CD4-positive, alpha-beta T cell (primary cell): ENCODE measurements at regions of chr18 and their contacts with region 1.

Region 1: DNA sequence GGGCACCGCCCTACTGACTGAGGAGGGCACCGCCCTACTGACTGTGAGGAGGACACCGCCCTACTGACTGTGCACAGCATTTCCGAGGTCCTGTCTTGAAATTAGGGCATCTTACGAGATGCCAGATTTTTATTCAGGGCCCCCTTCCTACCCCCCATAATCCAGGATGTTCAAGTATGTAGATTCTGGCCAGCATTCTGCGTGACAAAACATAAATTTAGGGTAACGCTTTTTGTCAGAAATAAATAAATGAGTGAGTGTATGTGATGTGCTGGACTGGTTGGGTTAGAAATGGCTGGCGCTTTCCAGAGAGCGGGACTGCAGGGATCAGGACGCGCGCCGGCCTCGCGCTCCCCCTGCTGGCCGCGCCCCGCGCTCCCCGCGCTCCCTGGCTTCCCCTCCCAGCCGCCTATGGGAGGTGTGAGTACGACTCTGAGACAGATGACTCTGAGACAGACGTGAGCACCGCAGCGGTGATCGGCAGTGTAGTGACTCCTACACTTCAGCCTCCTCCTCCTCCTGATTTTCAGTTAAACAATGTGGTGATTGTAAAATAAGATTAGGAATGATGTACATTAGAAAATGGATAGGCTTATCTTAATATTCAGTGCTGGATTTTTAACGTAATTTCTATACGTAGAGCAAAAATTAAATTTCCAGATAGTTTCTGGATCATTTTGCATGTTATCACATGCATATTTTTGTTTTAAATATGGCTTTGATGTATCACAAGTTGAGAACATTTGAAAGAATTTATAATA is 149.2 kb upstream of the NFATC1 start:
- DNase-seq: peak; percentile 37 to 84 (median 60)
- ATAC-seq: peak; percentile 86
- H3K4me3 ChIP-seq: peak overlapping the region; percentile 17
- H3K4me3 Mint-ChIP-seq: peak overlapping the region; percentile 49
- H3K27ac ChIP-seq: peak overlapping the region in 1 of 2 donors; percentile 53
- H3K27ac Mint-ChIP-seq: peak overlapping the region; percentile 81
- H3K4me1 ChIP-seq: peaks cover 11% of the 10 kb centered on the region
- H3K4me1 Mint-ChIP-seq: peaks cover 17% of the 10 kb centered on the region
- H3K27me3 ChIP-seq: no peaks in the 10 kb centered on the region
- H3K27me3 Mint-ChIP-seq: no peaks in the 10 kb centered on the region
- CTCF ChIP-seq: peak; percentile 95

Region 2: DNA sequence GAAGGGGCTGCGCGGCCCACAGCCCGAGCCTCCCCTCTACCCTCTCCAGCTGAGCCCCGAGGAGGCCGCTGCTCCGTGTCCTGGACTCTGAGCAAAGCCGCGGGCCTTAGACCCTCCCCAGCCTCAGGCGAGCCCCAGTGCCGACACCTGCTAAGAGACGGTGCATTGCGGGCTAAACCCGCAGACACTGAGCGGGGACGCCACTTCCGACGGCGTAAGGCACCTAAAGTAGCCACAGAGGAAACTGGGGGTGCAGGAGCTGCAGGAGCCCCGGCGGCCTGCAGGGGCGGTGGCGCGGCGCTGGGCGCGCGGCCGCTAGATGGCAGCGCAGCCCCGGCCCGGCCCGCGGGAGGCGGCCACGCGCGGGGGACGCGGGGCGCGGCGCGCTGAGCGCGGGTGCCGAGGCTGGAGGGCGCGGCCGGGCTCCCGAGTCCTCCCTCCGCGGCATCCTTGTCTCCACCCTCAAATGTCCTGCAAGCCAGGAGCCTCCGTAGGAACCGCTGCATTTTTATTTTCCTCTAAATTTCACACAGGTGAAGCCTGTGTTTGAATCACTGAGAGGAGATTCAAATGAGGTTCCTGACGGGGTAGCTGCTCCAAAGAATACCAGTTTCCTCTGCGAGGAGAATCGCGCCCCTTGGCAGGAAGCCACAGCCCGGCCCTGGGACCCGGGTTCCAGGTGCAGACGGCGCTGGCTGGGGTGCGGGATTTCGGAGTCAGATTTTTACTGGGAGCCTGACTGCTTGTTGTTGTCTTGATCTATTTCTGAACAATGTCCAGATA is 1346.4 kb before region 1 on chr18:
- CTCF ChIA-PET with region 1: no interaction called
- POLR2A ChIA-PET with region 1: no interaction called
- intact Hi-C with region 1: loop called (anchors 5 to 10 kb)
- DNase-seq: peak; percentile 12 to 77 (median 40)
- ATAC-seq: peak; percentile 97
- H3K4me3 ChIP-seq: peak overlapping the region; percentile 26
- H3K4me3 Mint-ChIP-seq: peak overlapping the region; percentile 60
- H3K27ac ChIP-seq: no peak overlapping the region
- H3K27ac Mint-ChIP-seq: no peak overlapping the region
- H3K4me1 ChIP-seq: peaks cover 9% of the 10 kb centered on the region
- H3K4me1 Mint-ChIP-seq: no peaks in the 10 kb centered on the region
- H3K27me3 ChIP-seq: no peaks in the 10 kb centered on the region
- H3K27me3 Mint-ChIP-seq: peaks cover 20% of the 10 kb centered on the region
- CTCF ChIP-seq: peak; percentile 73

Region 3: DNA sequence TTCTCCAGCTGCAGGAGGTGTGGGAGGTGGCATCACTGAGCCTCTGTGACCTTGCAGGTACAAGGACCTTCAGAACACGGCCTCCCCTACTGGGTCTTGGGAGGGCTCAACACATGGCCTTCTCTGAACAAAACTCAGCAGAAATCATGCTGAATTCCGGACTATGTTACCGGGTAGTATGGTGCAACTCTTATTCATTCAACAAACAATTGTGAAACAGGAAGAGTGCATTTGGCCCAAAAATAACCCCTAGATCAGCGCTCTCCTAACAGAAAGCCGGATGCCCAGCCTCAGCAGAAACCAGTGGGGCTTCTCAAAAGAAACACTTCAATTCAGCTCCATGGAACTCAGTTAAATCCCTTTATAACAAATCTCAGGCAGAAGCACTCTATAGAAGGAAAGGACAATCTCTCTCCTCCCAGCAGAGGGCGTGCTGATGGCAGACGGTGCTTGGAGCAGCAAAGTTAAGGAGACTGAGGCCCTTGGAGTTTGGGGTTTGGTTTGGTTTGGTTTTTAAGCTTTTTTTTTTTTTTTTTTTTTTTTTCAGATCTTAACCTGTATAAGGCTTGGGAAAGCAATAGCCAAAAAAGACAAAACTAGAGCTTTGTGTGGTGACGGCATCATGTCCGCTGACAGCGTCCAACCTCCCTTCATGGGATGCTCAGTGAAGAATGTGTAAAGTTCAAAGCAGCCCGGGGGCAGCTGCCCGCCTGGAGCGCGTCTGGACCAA is 371.1 kb before region 1 on chr18:
- CTCF ChIA-PET with region 1: no interaction called
- POLR2A ChIA-PET with region 1: no interaction called
- intact Hi-C with region 1: loop called in 1 of 2 experiments (anchors 5 kb)
- DNase-seq: peak in 6 of 14 experiments; percentile 2 to 31 (median 18)
- ATAC-seq: no peak
- H3K4me3 ChIP-seq: no peak overlapping the region
- H3K4me3 Mint-ChIP-seq: no peak overlapping the region
- H3K27ac ChIP-seq: no peak overlapping the region
- H3K27ac Mint-ChIP-seq: no peak overlapping the region
- H3K4me1 ChIP-seq: no peaks in the 10 kb centered on the region
- H3K4me1 Mint-ChIP-seq: no peaks in the 10 kb centered on the region
- H3K27me3 ChIP-seq: peaks cover 0 to 2% of the 10 kb centered on the region in 2 experiments
- H3K27me3 Mint-ChIP-seq: peaks cover 42% of the 10 kb centered on the region
- CTCF ChIP-seq: peak; percentile 14

Region 4: GRCh38 chr18:78984941-78985784 is 261.4 kb before region 1 on chr18:
- CTCF ChIA-PET with region 1: no interaction called
- POLR2A ChIA-PET with region 1: no interaction called
- intact Hi-C with region 1: loop called (anchors 5 kb)
- DNase-seq: peak in 4 of 14 experiments; percentile 9 to 36 (median 24)
- ATAC-seq: peak; percentile 68
- H3K4me3 ChIP-seq: no peak overlapping the region
- H3K4me3 Mint-ChIP-seq: no peak overlapping the region
- H3K27ac ChIP-seq: no peak overlapping the region
- H3K27ac Mint-ChIP-seq: no peak overlapping the region
- H3K4me1 ChIP-seq: no peaks in the 10 kb centered on the region
- H3K4me1 Mint-ChIP-seq: peaks cover 7% of the 10 kb centered on the region
- H3K27me3 ChIP-seq: peaks cover 25 to 88% of the 10 kb centered on the region in 2 experiments
- H3K27me3 Mint-ChIP-seq: peaks cover 80% of the 10 kb centered on the region
- CTCF ChIP-seq: no peak

Region 5: GRCh38 chr18:79068937-79069791 is 177.4 kb before region 1 on chr18 and contains the start of gene ATP9B:
- CTCF ChIA-PET with region 1: no interaction called
- POLR2A ChIA-PET with region 1: no interaction called
- intact Hi-C with region 1: loop called (anchors 5 kb)
- DNase-seq: peak; percentile 94 to 100 (median 98)
- ATAC-seq: peak; percentile 77
- H3K4me3 ChIP-seq: peak within 1 kb of the TSS; percentile 56
- H3K4me3 Mint-ChIP-seq: peak within 1 kb of the TSS; percentile 91
- H3K27ac ChIP-seq: peak within 1 kb of the TSS; percentile 97 to 98
- H3K27ac Mint-ChIP-seq: peak within 1 kb of the TSS; percentile 100
- H3K4me1 ChIP-seq: peaks cover 21% of the 10 kb centered on the region
- H3K4me1 Mint-ChIP-seq: peaks cover 60% of the 10 kb centered on the region
- H3K27me3 ChIP-seq: no peaks in the 10 kb centered on the region
- H3K27me3 Mint-ChIP-seq: peaks cover 7% of the 10 kb centered on the region
- CTCF ChIP-seq: no peak
- total RNA-seq, gene ATP9B: 61.9 to 63.5 TPM